GM12878 (cell line): ENCODE measurements at regions of chr17 and their contacts with region 1.

Region 1: DNA sequence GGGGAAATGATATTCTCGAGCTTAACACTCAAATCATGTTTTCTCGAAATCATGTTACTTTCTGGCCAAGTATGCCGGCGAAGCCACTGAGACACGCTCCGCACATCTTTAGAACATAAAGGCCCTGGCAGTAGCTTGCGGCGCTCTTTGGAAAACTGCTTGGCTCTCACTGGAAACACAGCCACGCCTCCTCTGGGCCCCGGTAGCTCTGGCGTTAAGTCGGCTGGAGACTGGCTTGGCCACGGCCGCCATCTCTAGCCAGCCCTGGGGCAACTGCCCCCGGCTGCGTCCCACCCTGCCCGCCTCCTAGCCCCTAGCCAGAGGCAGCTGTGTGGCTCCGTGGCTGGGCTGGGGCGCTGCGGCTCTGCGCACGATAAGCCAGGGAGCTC is 9.2 kb upstream of the BAIAP2 start:
- DNase-seq: no peak
- ATAC-seq: no peak
- H3K4me3 ChIP-seq: no peak overlapping the region
- H3K27ac ChIP-seq: no peak overlapping the region
- H3K4me1 ChIP-seq: no peaks in the 10 kb centered on the region
- H3K27me3 ChIP-seq: no peaks in the 10 kb centered on the region; a peak in 2 of 4 replicates
- CTCF ChIP-seq: no peak
- EP300 ChIP-seq: no peak
- POLR2A ChIP-seq: no peak
- RAD21 ChIP-seq: no peak

Region 2: GRCh38 chr17:81049973-81050551 is 24.3 kb after region 1 on chr17:
- CTCF ChIA-PET with region 1: interaction called, 13 read pairs
- POLR2A ChIA-PET with region 1: no interaction called
- RAD21 ChIA-PET with region 1: no interaction called
- SMC1A ChIA-PET with region 1: interaction called, 5 read pairs
- in situ Hi-C with region 1: no loop called
- intact Hi-C with region 1: no loop called
- DNase-seq: peak; percentile 21
- ATAC-seq: peak; percentile 88
- H3K4me3 ChIP-seq: 0 out of 2 replicates have a peak overlapping the region, but pooled peaks have one; percentile 11
- H3K27ac ChIP-seq: peak overlapping the region; percentile 61; the same call in 1 of the 2 replicates
- H3K4me1 ChIP-seq: peaks cover 22% of the 10 kb centered on the region
- H3K27me3 ChIP-seq: no peaks in the 10 kb centered on the region; a peak in 1 of 4 replicates
- CTCF ChIP-seq: no peak
- EP300 ChIP-seq: peak in 1 of 2 experiments; percentile 77; a peak in 2 of 4 replicates
- POLR2A ChIP-seq: no peak
- RAD21 ChIP-seq: no peak